ENCODE measurements at regions of chr6 and their contacts with region 1.

Region 1: GRCh38 chr6:1970151-1970561 is 275.2 kb downstream of the GMDS start:
- DNase-seq: no peak
- H3K4me3 ChIP-seq: no peak overlapping the region
- H3K27ac ChIP-seq: no peak overlapping the region
- H3K4me1 ChIP-seq: no peaks in the 10 kb centered on the region
- H3K27me3 ChIP-seq: no peaks in the 10 kb centered on the region
- CTCF ChIP-seq: no peak
- POLR2A ChIP-seq: no peak

Region 2: DNA sequence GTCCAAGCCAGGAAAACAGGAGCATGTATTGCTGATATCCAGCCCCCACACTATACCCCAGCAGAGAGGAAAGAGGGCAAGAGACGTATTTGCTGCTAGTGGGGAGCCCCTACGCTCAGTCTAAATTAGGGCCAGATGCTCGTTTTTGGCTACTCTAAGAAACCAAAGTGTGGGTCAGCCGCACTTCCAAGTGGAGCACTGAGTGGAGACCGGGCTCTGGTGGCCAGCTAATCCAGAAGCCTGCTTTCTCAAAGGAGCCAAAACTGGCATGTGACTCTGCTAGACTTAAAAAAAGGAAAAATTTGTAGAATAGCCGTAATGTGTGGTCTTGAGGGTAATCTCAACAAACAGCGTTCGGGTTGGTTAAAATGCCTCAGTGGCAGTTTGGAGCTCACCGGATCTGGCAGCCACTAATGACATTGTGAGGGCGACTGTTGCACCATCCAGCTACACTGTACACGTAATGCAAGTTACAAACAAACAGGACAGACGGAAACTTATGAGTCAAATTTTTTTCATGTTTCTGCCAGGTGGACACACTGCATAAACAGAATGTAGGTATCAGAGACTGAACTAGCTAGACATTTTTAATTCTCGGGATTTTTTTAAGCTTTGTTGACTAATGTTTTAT is 129.6 kb before region 1 on chr6:
- intact Hi-C with region 1: loop called (anchors 10 kb)
- DNase-seq: no peak
- H3K4me3 ChIP-seq: no peak overlapping the region
- H3K27ac ChIP-seq: no peak overlapping the region
- H3K4me1 ChIP-seq: no peaks in the 10 kb centered on the region
- H3K27me3 ChIP-seq: no peaks in the 10 kb centered on the region
- CTCF ChIP-seq: no peak
- POLR2A ChIP-seq: no peak

Region 3: DNA sequence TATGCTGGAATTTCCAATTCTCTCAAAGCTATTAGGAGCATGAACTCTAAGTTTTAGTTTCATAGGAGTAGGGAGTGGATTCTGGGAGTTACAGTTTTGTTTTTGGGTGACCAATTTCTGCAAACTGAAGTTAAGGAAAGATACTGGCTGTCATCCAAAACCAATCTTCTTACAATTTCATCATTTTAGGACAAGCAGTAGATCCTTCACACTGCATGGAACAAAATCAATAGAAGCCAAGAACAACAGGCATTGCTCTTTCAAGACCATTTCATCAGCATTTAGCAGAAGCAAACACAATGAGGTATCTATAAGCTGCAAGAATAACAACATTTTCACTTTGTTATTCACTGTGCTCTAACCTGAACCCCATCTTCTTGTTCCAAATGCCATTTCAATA is 102.3 kb after region 1 on chr6:
- intact Hi-C with region 1: no loop called
- DNase-seq: no peak
- H3K4me3 ChIP-seq: no peak overlapping the region
- H3K27ac ChIP-seq: no peak overlapping the region
- H3K4me1 ChIP-seq: no peaks in the 10 kb centered on the region
- H3K27me3 ChIP-seq: no peaks in the 10 kb centered on the region
- CTCF ChIP-seq: no peak
- POLR2A ChIP-seq: no peak

Measured in spleen (tissue), 13 donors.